ENCODE measurements at regions of chr17 and their contacts with region 1.

Region 1: DNA sequence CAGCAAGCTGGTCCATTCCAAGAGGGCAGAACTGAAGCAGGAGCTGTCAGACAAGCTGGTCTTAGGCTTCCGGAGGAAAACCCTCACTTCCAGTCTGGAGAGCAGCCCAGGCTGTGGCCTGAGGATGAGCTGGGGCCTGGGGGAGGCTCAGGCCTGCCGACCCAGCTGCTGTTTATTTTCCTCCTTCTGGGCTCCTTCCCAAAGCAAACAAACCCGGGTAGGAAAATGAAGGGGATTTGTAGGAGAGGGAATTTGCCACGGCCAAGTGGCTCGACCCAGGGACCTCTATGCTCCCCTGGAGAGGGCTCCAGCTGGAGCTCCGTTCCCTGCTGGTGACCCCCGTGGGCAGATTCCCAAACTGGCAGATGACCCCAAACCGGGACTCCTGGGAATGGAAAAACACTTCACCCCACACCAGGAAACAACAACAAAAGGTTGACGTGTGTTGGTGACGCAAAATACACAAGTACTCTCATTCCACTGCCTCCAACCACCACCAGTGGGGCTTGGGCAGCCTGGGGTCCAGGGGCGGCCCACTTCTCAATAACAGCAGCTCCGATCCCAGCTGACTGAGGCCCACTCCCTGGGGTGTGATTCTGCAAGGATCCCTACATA is 8.8 kb downstream of the JUP start:
- DNase-seq: peak; percentile 100
- H3K4me3 ChIP-seq: no peak overlapping the region
- H3K27ac ChIP-seq: peak overlapping the region; percentile 97
- H3K4me1 ChIP-seq: peaks cover 45% of the 10 kb centered on the region
- H3K27me3 ChIP-seq: no peaks in the 10 kb centered on the region
- CTCF ChIP-seq: peak in 1 of 2 donors; percentile 36
- POLR2A ChIP-seq: peak; percentile 65

Region 2: DNA sequence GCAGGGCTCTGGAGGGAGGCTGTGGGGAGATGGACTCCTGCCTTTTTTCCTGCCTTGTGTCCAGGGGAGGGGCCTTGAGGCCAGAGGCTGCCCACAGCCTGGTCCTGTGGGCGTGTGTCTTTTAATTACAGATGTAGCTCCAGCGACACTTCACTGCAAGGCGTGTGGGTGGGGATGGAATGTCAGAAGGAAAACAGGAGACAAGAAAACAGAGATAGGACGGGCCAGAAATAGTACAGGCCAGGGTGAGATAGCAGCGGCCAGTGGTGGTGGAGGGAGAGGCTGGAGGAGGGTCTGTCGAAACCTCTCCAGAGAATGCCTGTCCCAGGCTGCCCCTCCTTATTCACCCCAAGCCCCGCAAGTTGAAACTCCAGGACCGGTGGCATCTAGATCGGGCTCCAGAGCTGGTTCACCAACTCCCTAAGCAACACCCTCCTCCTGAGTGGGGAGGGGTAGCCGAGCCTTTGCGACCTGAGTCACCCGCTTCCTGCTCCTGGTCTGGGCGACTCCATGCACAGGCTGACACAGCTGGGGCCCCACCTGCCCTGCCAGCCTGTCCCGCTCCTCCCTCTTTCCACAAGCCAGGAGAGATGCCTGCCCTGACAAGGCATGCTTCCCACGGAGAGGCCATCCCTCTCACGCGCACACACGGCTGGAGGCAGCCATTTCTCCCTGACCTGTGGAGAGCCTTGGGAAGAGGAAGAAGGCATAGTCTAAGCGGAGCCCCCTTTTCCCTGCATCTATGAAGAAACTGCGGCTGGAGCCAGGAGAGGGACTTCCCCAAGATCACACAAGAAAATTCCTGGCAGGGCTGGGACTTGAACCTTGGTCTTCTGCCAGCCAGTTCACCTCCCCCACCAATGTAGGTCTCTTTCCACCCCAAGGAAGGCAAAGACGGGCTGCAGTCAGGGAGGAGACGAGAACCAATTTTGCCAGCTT is 15.4 kb after region 1 on chr17:
- CTCF ChIA-PET with region 1: interaction called, 67 read pairs
- POLR2A ChIA-PET with region 1: interaction called, 13 read pairs
- dilution Hi-C with region 1: no loop called
- intact Hi-C with region 1: loop called (anchors 1 kb)
- DNase-seq: peak; percentile 69
- H3K4me3 ChIP-seq: no peak overlapping the region
- H3K27ac ChIP-seq: peak overlapping the region; percentile 51
- H3K4me1 ChIP-seq: peaks cover 16% of the 10 kb centered on the region
- H3K27me3 ChIP-seq: peaks cover 0 to 7% of the 10 kb centered on the region in 2 experiments
- CTCF ChIP-seq: no peak
- POLR2A ChIP-seq: no peak

Region 3: DNA sequence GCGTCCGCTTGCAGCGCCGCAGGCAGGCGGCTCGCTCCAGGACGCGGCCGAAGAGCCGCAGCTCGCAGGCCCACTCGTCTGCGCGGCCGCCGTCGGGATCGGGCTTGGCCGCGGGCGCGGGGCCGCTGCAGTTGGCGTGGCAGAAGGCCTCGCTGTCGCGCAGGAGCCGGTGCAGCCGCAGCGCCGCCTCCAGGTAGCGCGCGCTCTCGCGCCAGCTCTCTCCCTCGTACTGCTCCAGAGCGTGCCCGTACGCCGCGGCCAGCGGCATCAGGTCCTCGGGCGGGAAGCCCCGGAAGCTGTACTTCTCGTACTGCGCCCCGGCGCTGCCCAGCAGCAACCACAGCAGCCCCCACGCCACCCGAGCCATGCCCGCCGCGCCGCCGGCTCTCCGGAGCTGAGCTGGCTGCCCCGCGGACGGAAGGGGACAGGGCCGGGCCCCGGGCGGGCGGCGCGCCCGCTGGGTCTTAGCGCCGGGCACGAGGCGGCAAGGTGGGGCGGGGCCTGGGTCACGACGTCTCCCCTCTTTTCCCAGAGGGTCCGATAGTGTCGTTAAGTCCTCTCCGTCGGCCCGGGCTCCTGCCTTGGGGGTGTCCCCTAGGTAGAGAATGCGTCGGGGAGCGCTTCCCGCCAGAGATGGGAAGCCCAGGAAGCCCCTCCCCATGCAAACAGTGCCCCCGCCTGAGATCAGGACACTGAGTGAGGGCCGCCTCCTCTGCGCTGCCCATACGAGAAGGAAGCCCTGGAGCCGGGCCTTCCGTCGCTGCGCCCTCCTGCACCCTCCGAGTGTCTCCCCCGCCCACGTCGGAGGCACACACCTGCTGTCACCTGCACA is 34.1 kb after region 1 on chr17 and contains the start of gene P3H4:
- CTCF ChIA-PET with region 1: interaction called, 15 read pairs
- POLR2A ChIA-PET with region 1: interaction called, 4 read pairs
- dilution Hi-C with region 1: no loop called
- intact Hi-C with region 1: loop called (anchors 1 kb)
- DNase-seq: peak; percentile 84
- H3K4me3 ChIP-seq: peak within 1 kb of the TSS; percentile 51 to 81 (median 78)
- H3K27ac ChIP-seq: peak within 1 kb of the TSS; percentile 46
- H3K4me1 ChIP-seq: peaks cover 26% of the 10 kb centered on the region
- H3K27me3 ChIP-seq: no peaks in the 10 kb centered on the region
- CTCF ChIP-seq: peak; percentile 60 to 85
- POLR2A ChIP-seq: peak; percentile 90
- total RNA-seq, gene P3H4: 37.1 and 39.2 TPM in 2 replicates

Region 4: DNA sequence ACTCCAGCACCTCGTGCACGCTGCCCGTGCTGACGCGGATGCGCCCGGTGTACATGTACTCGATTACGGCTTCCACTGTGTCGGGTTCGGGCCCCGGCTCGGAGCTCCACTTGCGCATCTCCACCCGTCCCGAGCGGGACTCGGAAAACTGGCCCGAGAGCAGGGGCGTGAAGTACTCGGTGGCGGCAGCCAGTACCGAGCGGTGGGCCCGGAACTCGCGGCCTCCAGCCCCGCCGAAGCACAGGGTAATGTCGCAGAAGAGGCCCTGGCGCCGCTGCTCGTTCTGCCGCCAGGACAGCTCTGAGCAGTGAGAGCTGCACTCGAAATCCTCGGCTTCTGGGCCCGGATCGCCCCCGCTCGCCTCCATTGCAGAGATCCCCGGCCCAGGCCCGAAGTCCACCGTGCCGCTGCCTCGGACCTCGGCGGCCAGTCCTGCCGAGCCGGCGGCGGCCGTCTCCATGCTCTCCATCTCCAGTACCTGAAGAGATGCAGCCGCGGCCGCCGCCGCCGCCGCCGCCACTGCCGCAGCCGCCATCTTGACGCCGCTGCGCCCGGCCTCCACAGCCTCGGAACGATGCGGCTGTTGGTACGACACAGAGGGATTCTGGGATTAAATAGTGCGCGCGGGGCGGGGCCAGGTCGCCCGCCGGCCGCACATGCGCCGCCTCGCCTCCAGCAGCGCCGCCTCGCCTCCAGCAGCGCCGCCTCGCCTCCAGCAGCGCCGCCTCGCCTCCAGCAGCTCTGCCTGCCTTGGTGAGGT is 87.3 kb after region 1 on chr17 and contains the start of gene KLHL11:
- CTCF ChIA-PET with region 1: interaction called, 4 read pairs
- POLR2A ChIA-PET with region 1: no interaction called
- dilution Hi-C with region 1: no loop called
- intact Hi-C with region 1: loop called (anchors 1 kb)
- DNase-seq: peak; percentile 94
- H3K4me3 ChIP-seq: peak within 1 kb of the TSS; percentile 45 to 86 (median 77)
- H3K27ac ChIP-seq: peak within 1 kb of the TSS; percentile 24
- H3K4me1 ChIP-seq: peaks cover 11% of the 10 kb centered on the region
- H3K27me3 ChIP-seq: no peaks in the 10 kb centered on the region
- CTCF ChIP-seq: no peak
- POLR2A ChIP-seq: peak; percentile 95
- total RNA-seq, gene KLHL11: 11.0 and 12.6 TPM in 2 replicates